ENCODE measurements at regions of chr22 and their contacts with region 1.

Region 1: DNA sequence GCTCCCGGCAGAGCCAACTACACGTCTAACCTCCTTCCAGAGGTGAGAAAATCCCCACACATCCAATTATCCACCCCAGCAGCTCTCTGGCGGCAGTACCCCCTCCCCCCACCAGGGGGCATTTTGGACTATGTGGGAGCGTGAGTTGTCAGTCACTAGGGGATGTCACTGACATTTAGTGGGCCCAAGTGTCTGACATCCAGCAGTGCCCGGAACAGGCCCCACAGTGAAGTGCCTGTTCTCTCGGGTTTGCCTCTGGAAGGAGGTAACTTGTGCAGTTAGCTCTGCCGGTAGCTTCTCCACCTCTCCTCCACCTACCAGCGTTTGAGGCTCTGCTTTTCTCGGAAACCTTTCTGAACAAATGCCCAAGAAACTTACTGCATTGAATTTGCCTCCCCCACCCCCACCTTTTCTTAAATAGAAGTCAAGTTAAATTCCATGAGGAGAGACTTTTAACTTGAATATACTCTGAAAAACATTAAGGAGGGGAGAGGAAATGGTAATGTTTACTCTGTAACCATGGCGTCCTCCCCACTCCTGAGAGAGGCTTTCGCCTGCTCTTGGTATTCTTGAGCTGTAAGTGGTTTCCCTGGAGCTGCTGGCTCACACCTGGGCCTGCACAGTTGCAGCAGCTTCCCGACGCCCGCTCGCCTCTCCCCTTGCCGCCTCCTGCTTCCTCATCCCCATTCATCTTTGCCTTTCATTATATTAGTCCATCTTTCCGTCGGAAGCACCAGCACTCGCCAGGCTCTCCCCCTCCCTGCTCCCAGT is 112.8 kb downstream of the WNT7B start:
- DNase-seq: peak; percentile 66
- H3K4me3 Mint-ChIP-seq: no peak overlapping the region
- H3K27ac Mint-ChIP-seq: no peak overlapping the region
- H3K4me1 Mint-ChIP-seq: no peaks in the 10 kb centered on the region
- H3K27me3 Mint-ChIP-seq: peaks cover 17% of the 10 kb centered on the region
- CTCF ChIP-seq: peak; percentile 90

Region 2: DNA sequence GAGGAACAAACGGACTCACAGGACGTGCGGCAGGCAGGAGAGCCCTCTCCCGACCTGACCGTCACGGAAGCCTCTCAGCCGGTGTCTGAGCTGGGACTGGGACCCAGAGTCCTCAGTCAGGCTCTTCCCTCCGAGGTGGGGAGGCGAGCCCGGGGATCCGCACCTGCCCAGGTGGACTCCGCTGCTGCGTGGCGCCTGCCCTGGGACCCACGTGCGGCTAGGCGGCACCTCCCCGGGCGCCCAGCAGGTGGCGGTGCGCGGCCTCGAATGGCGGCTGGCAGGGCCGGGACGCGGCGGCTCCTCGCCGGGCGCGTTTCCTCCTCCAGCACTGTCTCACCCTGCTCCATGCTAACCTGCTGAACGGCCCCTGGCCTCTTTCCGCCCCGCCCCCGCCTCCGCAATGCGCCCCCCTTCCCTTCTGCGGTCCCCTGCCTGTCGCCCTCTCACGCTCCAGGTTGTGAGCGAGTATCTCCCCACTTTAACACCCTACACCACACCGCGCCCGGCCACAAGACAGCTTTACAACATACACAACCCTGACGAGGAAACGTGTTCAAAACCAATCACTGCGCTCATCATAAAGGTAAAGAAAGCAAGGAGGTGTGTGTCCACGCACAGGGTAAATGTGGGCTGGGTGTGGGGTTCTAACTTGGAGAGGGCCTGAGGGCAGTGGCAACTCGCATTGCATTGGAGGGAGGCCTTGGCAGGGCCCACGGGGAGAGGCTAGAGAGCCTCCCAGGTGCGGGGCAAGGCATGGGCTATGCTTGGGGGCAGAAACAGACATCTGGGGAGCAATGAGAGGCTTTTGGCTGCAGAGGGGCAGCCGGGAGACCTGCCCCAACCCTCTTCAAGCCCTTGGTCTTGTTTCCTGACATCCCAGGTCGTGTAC is 218.4 kb before region 1 on chr22:
- CTCF ChIA-PET with region 1: interaction called, 17 read pairs
- POLR2A ChIA-PET with region 1: no interaction called
- intact Hi-C with region 1: loop called (anchors 5 kb)
- DNase-seq: peak; percentile 61
- H3K4me3 Mint-ChIP-seq: no peak overlapping the region
- H3K27ac Mint-ChIP-seq: no peak overlapping the region
- H3K4me1 Mint-ChIP-seq: no peaks in the 10 kb centered on the region
- H3K27me3 Mint-ChIP-seq: peaks cover 13% of the 10 kb centered on the region
- CTCF ChIP-seq: peak; percentile 98

Region 3: GRCh38 chr22:45785458-45785857 is 78.7 kb before region 1 on chr22:
- CTCF ChIA-PET with region 1: interaction called, 12 read pairs
- POLR2A ChIA-PET with region 1: interaction called, 4 read pairs
- intact Hi-C with region 1: no loop called
- DNase-seq: peak; percentile 85
- H3K4me3 Mint-ChIP-seq: peak overlapping the region; percentile 25
- H3K27ac Mint-ChIP-seq: peak overlapping the region; percentile 92
- H3K4me1 Mint-ChIP-seq: peaks cover 19% of the 10 kb centered on the region
- H3K27me3 Mint-ChIP-seq: no peaks in the 10 kb centered on the region
- CTCF ChIP-seq: no peak

Region 4: DNA sequence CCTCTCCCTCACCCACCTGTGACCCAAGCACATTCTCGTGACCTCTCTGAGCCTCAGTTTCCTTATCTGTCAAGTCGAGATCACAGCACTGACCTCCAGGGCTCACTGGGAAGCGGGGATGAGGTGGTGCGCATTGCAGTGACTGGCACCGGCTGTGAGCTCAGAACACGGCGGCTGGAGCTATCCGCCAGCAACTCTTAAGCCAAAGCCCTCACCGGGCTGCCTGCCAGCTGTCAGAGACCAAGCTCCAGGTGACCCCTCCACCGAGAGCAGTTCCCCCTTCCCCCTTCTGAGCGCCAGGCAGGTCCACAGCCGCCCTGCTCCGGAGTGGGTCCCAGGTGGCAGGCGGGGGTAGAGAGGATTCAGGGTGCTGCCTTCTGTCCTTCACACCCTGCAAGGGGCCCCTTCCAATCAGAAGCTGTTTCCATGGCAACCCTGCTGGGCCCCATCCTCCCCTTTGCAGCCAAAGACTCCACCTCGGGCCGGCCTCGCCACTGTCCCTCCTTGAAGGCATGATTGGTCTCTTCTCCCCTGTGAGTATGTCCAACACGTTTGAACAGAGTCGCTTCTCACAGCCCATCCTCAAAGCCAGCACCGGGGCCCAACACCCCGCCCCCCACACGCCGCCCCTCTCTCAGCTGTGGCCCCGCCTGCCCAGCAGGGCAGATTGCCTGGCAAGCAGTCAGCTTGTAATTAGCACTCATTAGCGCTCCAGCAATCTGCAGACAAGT is 14.1 kb after region 1 on chr22:
- CTCF ChIA-PET with region 1: interaction called, 33 read pairs
- POLR2A ChIA-PET with region 1: interaction called, 3 read pairs
- intact Hi-C with region 1: no loop called
- DNase-seq: no peak
- H3K4me3 Mint-ChIP-seq: no peak overlapping the region
- H3K27ac Mint-ChIP-seq: no peak overlapping the region
- H3K4me1 Mint-ChIP-seq: no peaks in the 10 kb centered on the region
- H3K27me3 Mint-ChIP-seq: peaks cover 25% of the 10 kb centered on the region
- CTCF ChIP-seq: no peak

Region 5: DNA sequence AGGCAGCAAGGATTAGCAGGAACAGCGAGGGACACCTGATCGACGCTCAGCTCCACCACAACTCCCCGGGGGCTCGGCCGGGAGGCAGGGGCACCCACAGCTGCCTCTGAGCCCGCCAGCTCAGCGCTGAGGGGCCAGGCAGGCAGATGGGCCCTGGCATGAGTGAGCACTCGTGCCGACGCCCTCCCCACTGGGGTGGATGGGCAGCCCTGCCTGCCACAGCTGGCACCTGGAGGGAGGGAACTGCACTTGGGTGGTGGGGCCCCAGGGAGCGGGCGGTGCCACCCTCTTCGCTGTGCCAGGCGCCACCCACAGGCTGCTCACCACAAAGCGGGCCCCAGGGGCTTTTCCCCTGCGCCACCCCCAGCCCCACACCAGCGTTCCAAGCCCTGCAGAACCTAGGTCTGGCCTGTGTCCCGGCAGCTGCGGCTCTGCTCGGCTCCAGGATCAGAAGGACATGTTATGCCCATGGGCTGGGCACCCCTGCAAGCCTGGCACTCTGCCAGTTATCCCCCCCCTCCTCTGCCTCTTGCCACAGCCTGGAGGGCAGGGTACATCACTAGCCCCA is 84.0 kb after region 1 on chr22:
- CTCF ChIA-PET with region 1: interaction called, 12 read pairs
- POLR2A ChIA-PET with region 1: no interaction called
- intact Hi-C with region 1: no loop called
- DNase-seq: no peak
- H3K4me3 Mint-ChIP-seq: no peak overlapping the region
- H3K27ac Mint-ChIP-seq: no peak overlapping the region
- H3K4me1 Mint-ChIP-seq: peaks cover 1% of the 10 kb centered on the region
- H3K27me3 Mint-ChIP-seq: no peaks in the 10 kb centered on the region
- CTCF ChIP-seq: no peak

Region 6: DNA sequence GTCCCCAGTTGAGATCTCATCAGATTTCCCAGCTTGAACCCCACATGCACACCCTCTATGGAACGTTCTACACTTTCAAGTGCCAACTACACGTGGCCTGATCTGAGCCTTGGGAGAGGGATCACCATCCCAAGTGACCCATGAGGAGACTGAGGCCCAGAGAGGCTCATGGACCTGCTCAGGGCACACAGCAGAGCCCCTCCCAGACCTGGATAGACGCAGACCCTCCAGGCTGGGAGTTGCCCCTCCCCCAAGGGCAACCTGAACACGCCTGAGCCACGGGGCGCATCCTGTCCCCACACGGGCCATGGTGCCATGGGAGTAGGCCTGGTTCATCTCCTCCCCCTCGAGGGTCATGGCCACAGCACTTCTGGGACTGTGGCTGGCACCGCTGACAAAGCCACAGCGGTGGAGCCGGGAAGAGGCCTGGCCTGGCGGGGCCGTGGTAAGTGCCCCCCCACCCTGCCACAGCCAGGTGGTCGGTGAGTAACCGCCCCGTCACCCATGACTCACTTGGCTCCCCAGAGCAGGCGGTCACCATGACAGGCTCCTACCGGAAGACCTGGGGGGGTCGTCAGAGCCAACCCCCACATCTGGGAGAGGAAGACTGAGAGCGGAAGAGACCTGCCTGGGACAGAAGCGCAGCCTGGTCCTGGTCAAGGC is 104.7 kb after region 1 on chr22:
- CTCF ChIA-PET with region 1: interaction called, 11 read pairs
- POLR2A ChIA-PET with region 1: interaction called, 3 read pairs
- intact Hi-C with region 1: loop called (anchors 1 kb)
- DNase-seq: peak; percentile 75
- H3K4me3 Mint-ChIP-seq: no peak overlapping the region
- H3K27ac Mint-ChIP-seq: no peak overlapping the region
- H3K4me1 Mint-ChIP-seq: no peaks in the 10 kb centered on the region
- H3K27me3 Mint-ChIP-seq: no peaks in the 10 kb centered on the region
- CTCF ChIP-seq: no peak